ENCODE measurements at regions of chr20 and their contacts with region 1.

Region 1: GRCh38 chr20:36573103-36573794 is at the start of gene TGIF2:
- DNase-seq: peak; percentile 92
- ATAC-seq: peak; percentile 81
- H3K4me3 Mint-ChIP-seq: peak within 1 kb of the TSS; percentile 85
- H3K27ac Mint-ChIP-seq: peak within 1 kb of the TSS; percentile 94
- H3K4me1 Mint-ChIP-seq: peaks cover 37% of the 10 kb centered on the region
- H3K27me3 Mint-ChIP-seq: no peaks in the 10 kb centered on the region
- total RNA-seq, gene TGIF2: 32.5 to 40.9 TPM

Region 2: DNA sequence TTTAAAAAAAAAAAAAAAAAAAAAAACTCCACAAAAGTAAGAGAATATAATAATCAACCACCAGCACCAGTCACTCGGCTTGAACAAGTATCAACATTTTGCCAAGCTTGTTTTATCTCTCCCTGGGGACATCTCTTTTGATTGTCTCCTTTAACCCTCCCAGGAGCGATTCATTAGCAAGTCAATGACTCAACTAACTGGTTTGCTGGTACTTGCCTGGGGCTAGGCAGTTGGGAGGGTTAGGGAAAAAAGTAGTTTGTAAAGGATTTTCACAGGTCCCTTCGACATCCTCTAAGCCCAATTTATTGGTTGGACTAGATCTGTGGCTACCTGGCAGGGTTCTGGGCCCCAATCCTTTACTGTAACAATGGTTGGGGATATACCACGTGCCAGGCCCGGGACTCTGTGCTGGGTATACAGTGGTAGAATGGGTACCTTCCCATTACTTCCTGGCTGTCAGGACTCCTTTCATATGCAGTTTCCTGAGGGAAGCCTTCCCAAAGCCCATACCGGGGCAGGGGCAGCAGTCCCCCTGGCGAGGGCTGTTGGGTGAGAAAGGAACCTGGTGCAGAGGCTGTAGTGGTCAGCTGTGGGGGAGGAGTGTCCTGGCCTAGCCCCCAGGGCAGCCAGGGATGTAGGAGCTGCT is 12.3 kb after region 1 on chr20:
- CTCF ChIA-PET with region 1: interaction called, 13 read pairs
- DNase-seq: no peak
- ATAC-seq: no peak
- H3K4me3 Mint-ChIP-seq: no peak overlapping the region
- H3K27ac Mint-ChIP-seq: no peak overlapping the region
- H3K4me1 Mint-ChIP-seq: peaks cover 45% of the 10 kb centered on the region
- H3K27me3 Mint-ChIP-seq: no peaks in the 10 kb centered on the region

Region 3: DNA sequence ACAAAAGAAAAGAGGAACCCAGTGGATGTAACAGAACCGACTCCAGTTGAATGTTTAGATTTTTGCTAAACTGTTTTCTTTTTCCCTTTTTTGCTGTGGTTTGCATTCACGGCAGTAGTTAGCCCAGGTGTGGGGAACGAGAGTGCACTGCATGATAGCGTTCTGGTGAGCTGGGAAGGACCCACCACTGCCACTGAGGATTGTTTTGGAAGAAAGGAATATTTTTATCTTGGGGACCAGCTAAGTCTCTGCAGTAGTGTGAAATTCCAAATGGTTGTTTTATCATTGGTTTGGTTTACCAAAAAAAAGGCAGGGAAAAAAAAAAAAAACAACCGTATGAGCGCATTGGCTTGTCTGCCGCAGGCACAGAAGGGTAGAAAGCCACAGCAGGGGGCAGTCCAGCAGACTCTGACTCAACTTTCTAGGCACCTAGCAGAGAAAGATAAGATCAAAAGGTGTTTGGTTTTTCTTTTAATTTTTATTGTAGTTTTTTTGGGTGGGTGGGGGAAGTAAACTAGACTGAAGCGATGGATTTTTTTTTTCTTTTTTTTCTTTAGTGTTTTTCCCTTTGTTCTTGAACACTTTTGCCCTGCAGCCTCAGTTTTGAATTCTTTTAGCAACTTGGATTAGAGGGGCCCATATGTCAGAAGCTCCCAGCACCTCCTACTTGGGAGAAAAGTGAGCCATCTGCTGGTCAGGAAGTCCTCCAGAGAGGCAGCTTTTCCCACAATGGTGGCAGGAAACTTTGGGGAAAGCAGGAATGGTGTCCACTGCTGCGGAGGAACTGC is 18.8 kb after region 1 on chr20:
- CTCF ChIA-PET with region 1: interaction called, 43 read pairs
- DNase-seq: peak; percentile 76
- ATAC-seq: peak; percentile 53
- H3K4me3 Mint-ChIP-seq: peak overlapping the region; percentile 5
- H3K27ac Mint-ChIP-seq: peak overlapping the region; percentile 85
- H3K4me1 Mint-ChIP-seq: peaks cover 73% of the 10 kb centered on the region
- H3K27me3 Mint-ChIP-seq: no peaks in the 10 kb centered on the region

Region 4: DNA sequence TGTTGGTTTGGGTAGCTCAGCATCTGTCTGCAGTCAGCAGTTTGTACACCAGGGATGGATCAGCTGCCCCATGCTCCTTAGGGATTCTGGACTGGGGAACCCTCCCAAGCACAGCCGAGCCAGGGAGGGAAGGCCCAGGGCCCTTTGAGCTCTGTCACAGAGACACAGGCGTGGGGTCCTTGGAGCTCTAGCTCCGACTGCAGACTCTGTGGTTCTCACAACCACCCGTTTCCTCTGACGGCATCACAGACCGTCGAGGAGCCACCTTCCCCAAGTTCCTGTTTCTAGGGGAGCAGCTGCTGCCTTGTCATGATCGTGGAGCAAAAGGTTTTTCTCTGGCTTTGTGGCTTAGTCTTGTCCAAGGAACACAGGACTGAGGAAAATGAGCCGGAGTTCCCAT is 72.7 kb after region 1 on chr20 and contains the start of gene SLA2:
- CTCF ChIA-PET with region 1: no interaction called
- DNase-seq: peak; percentile 91
- ATAC-seq: peak; percentile 76
- H3K4me3 Mint-ChIP-seq: peak within 1 kb of the TSS; percentile 96
- H3K27ac Mint-ChIP-seq: peak within 1 kb of the TSS; percentile 98
- H3K4me1 Mint-ChIP-seq: peaks cover 40% of the 10 kb centered on the region
- H3K27me3 Mint-ChIP-seq: no peaks in the 10 kb centered on the region
- total RNA-seq, gene SLA2: 109 to 140 TPM